ENCODE measurements at regions of chr7 and their contacts with region 1.

Region 1: GRCh38 chr7:73727952-73728351 is 8.5 kb upstream of the STX1A start:
- DNase-seq: no peak
- H3K4me3 ChIP-seq: no peak overlapping the region
- H3K27ac ChIP-seq: no peak overlapping the region
- H3K4me1 ChIP-seq: no peaks in the 10 kb centered on the region; the same call in 1 of the 2 replicates
- H3K27me3 ChIP-seq: no peaks in the 10 kb centered on the region
- CTCF ChIP-seq: no peak

Region 2: DNA sequence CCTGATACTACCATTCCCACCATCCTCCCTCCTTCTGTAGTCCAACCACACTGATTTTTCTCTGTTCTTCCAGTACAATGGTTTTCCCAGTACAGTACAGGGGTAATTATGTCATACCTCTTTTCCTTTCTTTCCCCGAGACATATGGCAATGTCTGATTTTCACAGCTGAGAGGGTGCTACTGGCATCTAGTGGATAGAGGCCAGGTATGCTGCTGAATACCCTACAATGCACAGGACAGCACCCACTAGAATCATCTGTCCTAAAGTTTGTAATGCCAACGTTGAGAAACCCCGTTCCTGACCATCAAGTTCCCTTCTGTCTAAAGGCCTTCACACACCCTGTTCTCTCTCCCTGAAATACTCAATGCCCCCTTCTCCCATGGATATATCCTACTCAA is 226.6 kb before region 1 on chr7:
- CTCF ChIA-PET with region 1: no interaction called
- POLR2A ChIA-PET with region 1: interaction called, 28 read pairs
- intact Hi-C with region 1: no loop called
- DNase-seq: no peak
- H3K4me3 ChIP-seq: no peak overlapping the region
- H3K27ac ChIP-seq: no peak overlapping the region
- H3K4me1 ChIP-seq: no peaks in the 10 kb centered on the region
- H3K27me3 ChIP-seq: no peaks in the 10 kb centered on the region
- CTCF ChIP-seq: no peak

Region 3: GRCh38 chr7:73522105-73522872 is 205.7 kb before region 1 on chr7 and contains the start of gene BAZ1B:
- CTCF ChIA-PET with region 1: interaction called, 15 read pairs
- POLR2A ChIA-PET with region 1: interaction called, 27 read pairs
- intact Hi-C with region 1: no loop called
- DNase-seq: peak; percentile 93 to 98
- H3K4me3 ChIP-seq: peak within 1 kb of the TSS; percentile 84
- H3K27ac ChIP-seq: peak within 1 kb of the TSS; percentile 39
- H3K4me1 ChIP-seq: peaks cover 28% of the 10 kb centered on the region
- H3K27me3 ChIP-seq: no peaks in the 10 kb centered on the region
- CTCF ChIP-seq: no peak
- total RNA-seq, gene BAZ1B: 73.6 and 88.4 TPM in 2 replicates

Region 4: DNA sequence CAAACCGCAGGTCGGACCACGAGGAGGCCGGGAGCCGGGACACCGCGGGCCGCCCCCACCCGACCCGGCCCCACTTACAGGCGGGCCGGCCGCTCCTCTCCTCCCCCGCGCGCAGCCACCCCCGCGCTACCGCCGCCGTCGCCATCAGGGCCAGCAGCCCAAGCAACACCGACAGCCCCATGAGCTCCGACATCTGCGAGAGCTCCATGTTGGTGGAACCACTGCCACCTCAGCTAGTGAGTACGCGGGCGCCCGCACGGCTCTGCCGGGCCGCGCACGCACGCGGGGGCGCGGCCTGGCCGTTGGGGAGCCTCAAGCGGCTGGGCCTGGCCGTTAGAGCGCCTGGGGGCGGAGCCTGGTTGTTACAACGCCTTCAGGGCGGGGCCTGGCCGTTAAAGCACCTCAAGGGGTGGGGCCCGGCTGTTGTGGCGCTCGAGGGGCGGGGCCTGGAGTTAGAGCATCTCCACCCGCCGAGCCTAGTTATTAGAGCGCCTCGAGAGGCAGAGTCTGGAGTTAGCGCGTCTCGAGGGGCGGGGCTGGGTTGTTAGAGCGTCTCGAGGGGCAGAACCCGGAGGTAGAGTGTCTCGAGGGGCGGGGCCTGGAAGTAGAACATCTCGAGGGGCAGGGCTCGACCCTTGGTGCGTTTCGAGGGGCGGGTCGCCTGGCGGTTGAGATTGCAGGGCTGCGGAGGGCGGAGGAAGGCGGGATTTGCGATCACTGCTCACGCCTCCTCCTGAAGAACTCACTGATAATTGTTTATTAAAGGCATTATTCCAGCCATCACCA is 149.4 kb before region 1 on chr7 and contains the start of gene TBL2:
- CTCF ChIA-PET with region 1: no interaction called
- POLR2A ChIA-PET with region 1: interaction called, 13 read pairs
- intact Hi-C with region 1: no loop called
- DNase-seq: peak; percentile 95 to 99
- H3K4me3 ChIP-seq: peak within 1 kb of the TSS; percentile 96
- H3K27ac ChIP-seq: peak within 1 kb of the TSS; percentile 73
- H3K4me1 ChIP-seq: peaks cover 16% of the 10 kb centered on the region
- H3K27me3 ChIP-seq: no peaks in the 10 kb centered on the region
- CTCF ChIP-seq: no peak
- total RNA-seq, gene TBL2: 43.9 and 49.2 TPM in 2 replicates

Region 5: DNA sequence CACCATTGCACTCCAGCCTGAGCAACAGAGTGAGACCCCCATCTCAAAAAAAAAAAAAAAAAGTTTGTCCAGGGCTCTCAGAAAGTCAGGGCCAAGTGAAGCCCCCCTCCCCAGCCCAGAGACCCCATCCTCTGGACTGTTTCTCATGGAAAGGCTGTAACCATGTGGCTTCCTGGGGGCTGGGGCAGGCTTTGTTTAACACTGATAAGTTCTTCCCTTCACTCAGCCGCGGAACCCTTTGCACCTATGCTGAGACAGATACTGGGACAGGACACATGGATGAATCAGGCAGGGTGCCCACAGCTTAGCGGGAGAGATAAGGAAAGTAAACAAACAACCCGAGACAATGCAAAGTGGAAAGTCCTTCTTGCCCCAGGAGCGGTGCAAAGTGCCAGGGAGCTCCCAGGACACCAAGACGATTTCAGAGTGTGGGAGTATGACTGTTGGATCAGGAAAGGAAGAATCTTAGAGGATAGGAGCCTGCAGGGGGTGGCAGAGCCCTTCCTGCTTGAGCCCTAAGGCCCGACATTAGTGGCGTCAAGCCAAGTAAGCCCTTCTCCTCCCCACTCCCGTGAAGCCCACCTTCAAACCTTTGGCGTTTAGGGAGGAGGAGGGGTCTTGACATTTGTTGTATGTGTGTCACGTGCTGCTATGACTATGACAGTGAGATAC is 115.2 kb before region 1 on chr7:
- CTCF ChIA-PET with region 1: interaction called, 14 read pairs
- POLR2A ChIA-PET with region 1: interaction called, 9 read pairs
- intact Hi-C with region 1: loop called (anchors 1 kb)
- DNase-seq: peak; percentile 77 to 80
- H3K4me3 ChIP-seq: no peak overlapping the region
- H3K27ac ChIP-seq: no peak overlapping the region
- H3K4me1 ChIP-seq: peaks cover 21% of the 10 kb centered on the region
- H3K27me3 ChIP-seq: no peaks in the 10 kb centered on the region
- CTCF ChIP-seq: peak; percentile 40; the same call in 1 of the 2 replicates

Measured in PC-9 (cell line).